ENCODE measurements at regions of chr4 and their contacts with region 1.

Region 1: GRCh38 chr4:141346144-141346543 is 125.4 kb downstream of the ZNF330 start:
- DNase-seq: peak; percentile 73
- H3K4me3 ChIP-seq: no peak overlapping the region
- H3K27ac ChIP-seq: no peak overlapping the region
- H3K4me1 ChIP-seq: peaks cover 25% of the 10 kb centered on the region
- H3K27me3 ChIP-seq: no peaks in the 10 kb centered on the region
- CTCF ChIP-seq: peak; percentile 24 to 31
- POLR2A ChIP-seq: no peak

Region 2: DNA sequence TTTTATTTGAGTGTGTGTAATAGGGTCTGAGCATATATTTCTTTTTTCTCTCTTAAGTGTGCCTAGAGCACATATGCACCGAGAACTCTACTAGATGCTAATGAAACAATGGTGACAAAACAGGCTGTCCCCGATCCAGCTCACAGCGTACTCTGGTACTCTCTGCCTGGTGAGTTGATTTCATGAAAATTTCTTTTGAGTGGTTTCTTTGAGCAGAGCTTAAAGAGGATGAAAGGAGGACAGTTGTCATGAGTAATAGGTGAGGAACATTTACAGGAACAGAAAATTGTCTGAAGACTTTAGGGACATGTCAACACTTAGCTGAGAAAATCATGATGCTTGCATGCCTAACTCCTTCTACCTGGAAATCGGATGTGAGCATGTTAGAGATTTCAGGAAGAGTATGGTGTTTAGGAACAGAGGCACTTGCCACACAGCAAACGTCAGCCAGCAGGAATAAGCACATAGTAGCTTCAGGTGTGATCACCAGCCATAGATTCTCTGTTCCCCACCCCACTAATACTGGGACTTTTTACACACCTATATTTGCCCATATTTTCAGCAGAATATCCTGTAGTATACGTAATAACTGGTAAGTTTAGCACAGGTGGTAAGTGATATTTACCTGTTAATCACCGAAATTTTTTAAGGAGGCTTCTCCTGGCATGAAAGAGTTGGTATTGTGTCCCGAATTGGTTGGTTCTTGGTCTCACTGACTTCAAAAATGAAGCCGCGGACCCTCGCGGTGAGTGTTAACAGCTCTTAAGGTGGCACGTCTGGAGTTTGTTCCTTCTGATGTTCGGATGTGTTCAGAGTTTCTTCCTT is 14.4 kb before region 1 on chr4:
- CTCF ChIA-PET with region 1: interaction called, 14 read pairs
- POLR2A ChIA-PET with region 1: no interaction called
- dilution Hi-C with region 1: no loop called
- intact Hi-C with region 1: no loop called
- DNase-seq: no peak
- H3K4me3 ChIP-seq: no peak overlapping the region
- H3K27ac ChIP-seq: no peak overlapping the region
- H3K4me1 ChIP-seq: peaks cover 2% of the 10 kb centered on the region
- H3K27me3 ChIP-seq: no peaks in the 10 kb centered on the region
- CTCF ChIP-seq: no peak
- POLR2A ChIP-seq: no peak

Region 3: GRCh38 chr4:141416219-141416618 is 70.1 kb after region 1 on chr4:
- CTCF ChIA-PET with region 1: no interaction called
- POLR2A ChIA-PET with region 1: no interaction called
- dilution Hi-C with region 1: no loop called
- intact Hi-C with region 1: no loop called
- DNase-seq: no peak
- H3K4me3 ChIP-seq: no peak overlapping the region
- H3K27ac ChIP-seq: no peak overlapping the region
- H3K4me1 ChIP-seq: no peaks in the 10 kb centered on the region
- H3K27me3 ChIP-seq: peaks cover 0 to 2% of the 10 kb centered on the region in 2 experiments
- CTCF ChIP-seq: no peak
- POLR2A ChIP-seq: no peak

Region 4: GRCh38 chr4:141654098-141654497 is 308.0 kb after region 1 on chr4:
- CTCF ChIA-PET with region 1: interaction called, 10 read pairs
- POLR2A ChIA-PET with region 1: no interaction called
- dilution Hi-C with region 1: no loop called
- intact Hi-C with region 1: loop called (anchors 1 kb)
- DNase-seq: peak; percentile 82
- H3K4me3 ChIP-seq: no peak overlapping the region
- H3K27ac ChIP-seq: no peak overlapping the region
- H3K4me1 ChIP-seq: peaks cover 5% of the 10 kb centered on the region
- H3K27me3 ChIP-seq: no peaks in the 10 kb centered on the region
- CTCF ChIP-seq: peak; percentile 36 to 71
- POLR2A ChIP-seq: no peak

Region 5: DNA sequence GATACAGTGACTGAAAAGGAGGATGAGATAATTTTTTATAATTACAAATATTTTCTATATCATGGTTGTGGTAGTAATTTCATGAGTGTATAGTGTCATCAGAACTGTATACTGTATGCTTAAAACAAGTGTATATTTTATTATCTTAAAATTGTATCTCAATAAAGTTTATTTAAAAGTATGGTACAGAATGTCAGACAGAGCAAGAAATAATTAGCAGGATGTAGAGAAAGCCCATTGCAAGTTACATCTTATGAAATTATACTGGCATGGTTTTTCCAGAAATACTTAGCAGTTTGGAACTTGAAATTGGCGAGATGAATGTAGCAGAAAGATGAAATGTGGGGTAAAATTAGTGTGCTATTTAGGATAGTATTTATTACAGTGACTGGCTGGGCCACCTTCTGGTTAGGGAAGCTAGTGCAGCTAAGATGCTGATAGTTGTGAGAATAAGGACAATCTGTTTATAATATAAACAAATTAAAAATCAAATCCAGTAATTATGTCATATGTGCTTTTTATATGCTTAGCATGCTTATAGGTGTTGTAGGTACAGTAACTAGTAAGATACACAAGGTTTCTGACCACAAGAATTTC is 365.0 kb after region 1 on chr4:
- CTCF ChIA-PET with region 1: interaction called, 38 read pairs
- POLR2A ChIA-PET with region 1: no interaction called
- dilution Hi-C with region 1: no loop called
- intact Hi-C with region 1: loop called (anchors 1 kb)
- DNase-seq: peak; percentile 50
- H3K4me3 ChIP-seq: no peak overlapping the region
- H3K27ac ChIP-seq: no peak overlapping the region
- H3K4me1 ChIP-seq: peaks cover 4% of the 10 kb centered on the region
- H3K27me3 ChIP-seq: no peaks in the 10 kb centered on the region
- CTCF ChIP-seq: peak; percentile 40 to 52
- POLR2A ChIP-seq: no peak

Region 6: DNA sequence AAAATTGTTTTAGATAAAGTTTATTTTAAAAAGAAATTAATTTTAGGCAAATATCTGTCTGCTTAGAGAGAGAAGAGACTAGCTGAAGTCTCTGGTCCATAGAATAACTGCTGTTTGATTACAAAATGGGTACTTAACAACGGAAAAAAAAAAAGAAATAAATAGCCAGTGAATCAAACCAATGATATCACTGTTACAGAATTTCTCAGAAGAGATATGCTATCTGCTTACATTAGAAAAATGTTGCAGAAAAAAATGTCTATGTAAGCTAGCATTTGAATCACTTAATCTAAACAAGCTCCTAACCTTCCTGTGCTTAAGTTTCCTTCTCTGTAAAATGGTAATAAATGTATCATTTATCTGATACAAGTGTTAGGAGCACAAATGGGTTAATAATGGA is 480.1 kb after region 1 on chr4:
- CTCF ChIA-PET with region 1: interaction called, 6 read pairs
- POLR2A ChIA-PET with region 1: no interaction called
- dilution Hi-C with region 1: no loop called
- intact Hi-C with region 1: loop called (anchors 2 kb)
- DNase-seq: peak; percentile 45
- H3K4me3 ChIP-seq: no peak overlapping the region
- H3K27ac ChIP-seq: peak overlapping the region; percentile 68
- H3K4me1 ChIP-seq: peaks cover 19% of the 10 kb centered on the region
- H3K27me3 ChIP-seq: no peaks in the 10 kb centered on the region
- CTCF ChIP-seq: no peak
- POLR2A ChIP-seq: no peak

Region 7: GRCh38 chr4:142126890-142127497 is 780.9 kb after region 1 on chr4:
- CTCF ChIA-PET with region 1: interaction called, 20 read pairs
- POLR2A ChIA-PET with region 1: no interaction called
- dilution Hi-C with region 1: no loop called
- intact Hi-C with region 1: loop called (anchors 1 kb)
- DNase-seq: peak; percentile 89
- H3K4me3 ChIP-seq: no peak overlapping the region
- H3K27ac ChIP-seq: no peak overlapping the region
- H3K4me1 ChIP-seq: peaks cover 40% of the 10 kb centered on the region
- H3K27me3 ChIP-seq: no peaks in the 10 kb centered on the region
- CTCF ChIP-seq: peak; percentile 55 to 61
- POLR2A ChIP-seq: no peak

Region 8: DNA sequence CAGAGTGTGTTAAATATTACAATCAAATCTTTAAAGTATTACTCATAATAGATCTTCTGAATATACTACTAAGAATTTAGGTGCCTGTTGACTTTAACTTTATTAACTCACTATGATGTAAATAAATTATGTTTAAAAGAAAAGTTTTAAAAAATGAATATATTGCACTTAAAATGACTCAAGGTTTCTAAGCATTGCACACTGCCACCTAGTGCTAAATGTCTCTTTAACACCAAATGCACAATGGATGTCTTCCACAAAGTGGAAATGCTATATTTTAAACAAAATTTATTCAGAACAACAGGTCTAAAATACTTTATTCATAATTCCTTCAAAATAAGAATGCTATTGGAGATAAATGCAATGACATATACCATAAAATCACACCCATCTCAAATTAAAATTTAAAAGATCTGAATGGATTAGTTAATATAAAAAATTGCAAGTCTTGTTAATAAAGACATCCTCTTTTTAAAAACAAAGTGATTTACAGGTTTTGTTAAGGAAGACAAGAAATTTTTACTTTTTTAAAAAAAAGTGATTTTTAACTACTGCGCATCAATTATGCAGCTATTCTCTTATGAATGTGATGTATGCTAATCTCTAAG is 1494.5 kb after region 1 on chr4:
- CTCF ChIA-PET with region 1: interaction called, 7 read pairs
- POLR2A ChIA-PET with region 1: no interaction called
- dilution Hi-C with region 1: no loop called
- intact Hi-C with region 1: loop called (anchors 5 kb)
- DNase-seq: peak; percentile 62
- H3K4me3 ChIP-seq: no peak overlapping the region
- H3K27ac ChIP-seq: no peak overlapping the region
- H3K4me1 ChIP-seq: no peaks in the 10 kb centered on the region
- H3K27me3 ChIP-seq: peaks cover 0 to 6% of the 10 kb centered on the region in 2 experiments
- CTCF ChIP-seq: peak; percentile 47
- POLR2A ChIP-seq: no peak

Measured in endothelial cell of umbilical vein (primary cell).